Endothelial cell of umbilical vein (primary cell): ENCODE measurements at regions of chr10 and their contacts with region 1.

Region 1: DNA sequence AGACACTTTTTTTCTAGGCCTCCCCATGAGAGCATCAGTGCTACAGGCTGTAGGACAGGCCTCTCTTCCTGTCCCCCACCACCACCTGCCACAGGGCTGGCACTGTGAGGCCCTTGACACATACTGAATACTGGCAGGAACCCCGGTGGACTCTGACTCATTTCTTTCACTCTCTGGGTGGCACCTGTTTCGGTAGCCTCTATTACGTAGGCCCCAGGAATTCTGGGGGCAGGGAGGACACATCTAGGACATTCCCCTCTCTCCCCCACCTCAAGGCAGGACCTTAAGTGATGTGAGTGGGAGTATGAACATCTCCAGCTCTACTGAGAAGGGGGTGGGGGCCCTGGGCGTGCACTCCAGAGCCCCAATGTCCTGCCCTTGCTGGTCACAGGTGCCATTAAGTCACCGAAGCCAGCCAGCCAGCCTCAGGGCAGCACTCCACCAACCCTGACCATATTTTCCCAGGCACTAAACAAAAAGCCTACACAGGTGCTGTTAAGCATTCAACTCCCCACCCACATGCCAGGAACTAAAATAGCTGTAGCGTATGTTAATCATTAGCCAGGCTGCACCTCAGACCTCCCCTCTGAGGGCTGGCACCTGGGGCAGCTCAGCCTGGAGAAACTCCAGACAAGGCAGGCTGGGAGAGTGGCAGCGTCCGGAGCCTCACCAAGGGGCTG is 8.9 kb downstream of the ANXA11 start:
- DNase-seq: peak; percentile 40
- H3K4me3 ChIP-seq: no peak overlapping the region
- H3K27ac ChIP-seq: peak overlapping the region; percentile 13
- H3K4me1 ChIP-seq: peaks cover 26% of the 10 kb centered on the region
- H3K27me3 ChIP-seq: no peaks in the 10 kb centered on the region
- CTCF ChIP-seq: no peak
- POLR2A ChIP-seq: no peak

Region 2: GRCh38 chr10:80118674-80119073 is 77.7 kb before region 1 on chr10:
- CTCF ChIA-PET with region 1: no interaction called
- POLR2A ChIA-PET with region 1: no interaction called
- dilution Hi-C with region 1: no loop called
- intact Hi-C with region 1: no loop called
- DNase-seq: no peak
- H3K4me3 ChIP-seq: no peak overlapping the region
- H3K27ac ChIP-seq: no peak overlapping the region
- H3K4me1 ChIP-seq: no peaks in the 10 kb centered on the region
- H3K27me3 ChIP-seq: peaks cover 2 to 4% of the 10 kb centered on the region in 2 experiments
- CTCF ChIP-seq: no peak
- POLR2A ChIP-seq: no peak

Region 3: DNA sequence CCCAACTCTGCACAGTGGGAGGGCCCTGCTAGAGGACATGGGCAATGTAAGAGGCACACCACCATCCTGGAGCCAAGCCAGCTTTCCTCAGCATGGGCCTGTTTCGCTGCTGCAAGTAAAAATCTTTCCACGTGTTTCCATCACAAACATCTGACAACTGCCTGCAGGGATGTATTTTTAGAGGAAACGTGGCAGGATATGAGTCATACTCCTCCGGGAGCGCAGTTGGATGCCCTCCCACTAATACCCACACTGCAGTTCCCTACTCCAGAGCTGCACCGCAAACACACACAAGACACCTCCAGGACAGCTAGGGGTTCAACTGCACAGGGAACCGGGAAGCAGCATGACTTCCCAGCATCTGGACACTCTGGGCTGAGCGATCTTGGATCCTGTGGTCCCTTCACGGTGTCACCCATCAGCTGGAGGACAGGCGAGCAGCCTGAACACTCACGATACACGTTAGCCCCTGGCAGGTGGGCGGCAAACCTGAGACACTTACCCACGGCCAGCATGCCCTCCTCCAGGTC is 37.7 kb before region 1 on chr10:
- CTCF ChIA-PET with region 1: interaction called, 5 read pairs
- POLR2A ChIA-PET with region 1: interaction called, 4 read pairs
- dilution Hi-C with region 1: no loop called
- intact Hi-C with region 1: loop called (anchors 1 kb)
- DNase-seq: peak; percentile 96
- H3K4me3 ChIP-seq: no peak overlapping the region
- H3K27ac ChIP-seq: peak overlapping the region; percentile 21
- H3K4me1 ChIP-seq: peaks cover 17% of the 10 kb centered on the region
- H3K27me3 ChIP-seq: no peaks in the 10 kb centered on the region
- CTCF ChIP-seq: no peak
- POLR2A ChIP-seq: no peak

Region 4: DNA sequence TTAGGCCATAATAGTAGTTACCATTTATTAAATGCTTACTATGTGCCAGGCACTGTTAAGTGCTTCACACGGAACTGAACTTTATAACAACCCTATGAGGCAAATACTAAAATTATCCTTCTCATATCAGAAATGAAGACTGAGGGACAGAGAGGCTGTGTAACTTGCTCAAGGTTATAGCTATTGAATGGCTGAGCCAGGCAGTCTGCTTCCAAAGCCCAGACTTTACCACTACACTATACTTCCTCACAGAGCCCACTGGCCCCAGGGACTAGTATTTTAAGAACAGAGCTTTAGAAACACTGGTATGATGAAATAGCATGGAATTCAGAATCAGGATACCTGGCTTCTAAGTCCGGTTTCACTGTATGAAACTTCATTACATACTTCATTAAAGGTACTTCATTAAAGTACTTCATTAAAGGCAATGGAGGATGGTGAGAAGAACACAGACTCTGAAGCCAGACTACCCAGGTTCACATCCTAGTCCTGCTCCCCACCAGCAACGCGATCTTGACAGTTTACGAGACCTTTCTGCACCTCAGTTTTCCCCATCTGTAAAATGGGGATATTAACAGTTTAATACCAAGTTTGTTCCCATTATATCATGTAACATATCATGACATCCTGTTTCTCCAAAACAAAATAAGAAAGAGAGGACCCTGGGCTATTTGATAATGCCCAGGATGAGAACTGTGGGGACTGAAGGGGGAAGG is 10.7 kb before region 1 on chr10:
- CTCF ChIA-PET with region 1: interaction called, 5 read pairs
- POLR2A ChIA-PET with region 1: no interaction called
- dilution Hi-C with region 1: no loop called
- intact Hi-C with region 1: loop called (anchors 2 kb)
- DNase-seq: no peak
- H3K4me3 ChIP-seq: no peak overlapping the region
- H3K27ac ChIP-seq: no peak overlapping the region
- H3K4me1 ChIP-seq: no peaks in the 10 kb centered on the region
- H3K27me3 ChIP-seq: no peaks in the 10 kb centered on the region
- CTCF ChIP-seq: no peak
- POLR2A ChIP-seq: no peak

Region 5: GRCh38 chr10:81073155-81073554 is 876.7 kb after region 1 on chr10:
- CTCF ChIA-PET with region 1: no interaction called
- POLR2A ChIA-PET with region 1: no interaction called
- dilution Hi-C with region 1: no loop called
- intact Hi-C with region 1: no loop called
- DNase-seq: no peak
- H3K4me3 ChIP-seq: no peak overlapping the region
- H3K27ac ChIP-seq: no peak overlapping the region
- H3K4me1 ChIP-seq: no peaks in the 10 kb centered on the region
- H3K27me3 ChIP-seq: no peaks in the 10 kb centered on the region
- CTCF ChIP-seq: no peak
- POLR2A ChIP-seq: no peak